ENCODE measurements at regions of chr11 and their contacts with region 1.

Region 1: DNA sequence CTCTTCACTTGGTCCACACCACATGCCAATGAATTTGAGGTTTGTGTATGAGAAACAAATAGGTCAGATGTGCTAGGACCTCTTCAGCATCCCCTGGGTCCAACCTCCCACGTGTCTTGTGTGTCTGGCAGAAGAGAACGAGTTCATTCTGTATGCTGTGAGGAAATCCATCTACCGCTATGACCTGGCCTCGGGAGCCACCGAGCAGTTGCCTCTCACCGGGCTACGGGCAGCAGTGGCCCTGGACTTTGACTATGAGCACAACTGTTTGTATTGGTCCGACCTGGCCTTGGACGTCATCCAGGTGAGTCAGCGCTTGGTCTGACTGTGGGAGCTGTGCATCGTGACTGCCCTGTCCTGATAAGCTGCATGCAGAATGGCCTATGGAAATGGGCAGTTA is 101.0 kb upstream of the SORL1-AS1 start:
- DNase-seq: peak; percentile 70 to 84
- H3K4me3 ChIP-seq: no peak overlapping the region
- H3K27ac ChIP-seq: no peak overlapping the region
- H3K4me1 ChIP-seq: peaks cover 13% of the 10 kb centered on the region; the same call in 1 of the 2 replicates
- H3K27me3 ChIP-seq: peaks cover 68% of the 10 kb centered on the region
- CTCF ChIP-seq: no peak

Region 2: DNA sequence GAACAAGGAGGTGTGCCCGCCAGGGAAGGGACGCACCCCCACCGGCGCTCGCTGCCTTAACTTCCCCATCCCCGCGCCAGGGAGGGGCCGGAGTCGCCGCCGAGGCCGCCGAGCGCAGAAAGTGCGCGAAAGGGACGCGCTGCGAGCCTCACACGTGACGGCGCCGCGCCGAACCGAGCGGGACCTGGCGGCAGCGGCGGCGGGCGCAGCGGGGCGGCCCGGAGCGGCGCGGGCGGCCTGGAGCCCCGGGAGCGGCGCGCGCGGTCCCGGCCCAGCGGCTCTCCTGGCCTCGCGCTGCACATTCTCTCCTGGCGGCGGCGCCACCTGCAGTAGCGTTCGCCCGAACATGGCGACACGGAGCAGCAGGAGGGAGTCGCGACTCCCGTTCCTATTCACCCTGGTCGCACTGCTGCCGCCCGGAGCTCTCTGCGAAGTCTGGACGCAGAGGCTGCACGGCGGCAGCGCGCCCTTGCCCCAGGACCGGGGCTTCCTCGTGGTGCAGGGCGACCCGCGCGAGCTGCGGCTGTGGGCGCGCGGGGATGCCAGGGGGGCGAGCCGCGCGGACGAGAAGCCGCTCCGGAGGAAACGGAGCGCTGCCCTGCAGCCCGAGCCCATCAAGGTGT is 101.7 kb before region 1 on chr11 and contains the start of gene SORL1:
- CTCF ChIA-PET with region 1: no interaction called
- POLR2A ChIA-PET with region 1: no interaction called
- intact Hi-C with region 1: loop called (anchors 5 kb)
- DNase-seq: peak in 1 of 2 experiments; percentile 61
- H3K4me3 ChIP-seq: peak within 1 kb of the TSS; percentile 48; the same call in 1 of the 2 replicates
- H3K27ac ChIP-seq: no peak within 1 kb of the TSS
- H3K4me1 ChIP-seq: peaks cover 14% of the 10 kb centered on the region
- H3K27me3 ChIP-seq: no peaks in the 10 kb centered on the region
- CTCF ChIP-seq: peak; percentile 31; the same call in 1 of the 2 replicates
- total RNA-seq, gene SORL1: 4.9 and 6.4 TPM in 2 replicates

Region 3: GRCh38 chr11:121625777-121626506 is 72.1 kb after region 1 on chr11:
- CTCF ChIA-PET with region 1: no interaction called
- POLR2A ChIA-PET with region 1: no interaction called
- intact Hi-C with region 1: no loop called
- DNase-seq: no peak
- H3K4me3 ChIP-seq: no peak overlapping the region
- H3K27ac ChIP-seq: no peak overlapping the region
- H3K4me1 ChIP-seq: no peaks in the 10 kb centered on the region
- H3K27me3 ChIP-seq: peaks cover 78% of the 10 kb centered on the region
- CTCF ChIP-seq: no peak

Measured in PC-9 (cell line).